HEK293 (cell line): ENCODE measurements at regions of chr2 and their contacts with region 1.

Region 1: GRCh38 chr2:201182650-201183364 is at the start of gene CASP10:
- H3K4me3 ChIP-seq: peak within 1 kb of the TSS; percentile 42
- H3K27ac ChIP-seq: no peak within 1 kb of the TSS
- H3K4me1 ChIP-seq: no peaks in the 10 kb centered on the region
- CTCF ChIP-seq: peak; percentile 81

Region 2: DNA sequence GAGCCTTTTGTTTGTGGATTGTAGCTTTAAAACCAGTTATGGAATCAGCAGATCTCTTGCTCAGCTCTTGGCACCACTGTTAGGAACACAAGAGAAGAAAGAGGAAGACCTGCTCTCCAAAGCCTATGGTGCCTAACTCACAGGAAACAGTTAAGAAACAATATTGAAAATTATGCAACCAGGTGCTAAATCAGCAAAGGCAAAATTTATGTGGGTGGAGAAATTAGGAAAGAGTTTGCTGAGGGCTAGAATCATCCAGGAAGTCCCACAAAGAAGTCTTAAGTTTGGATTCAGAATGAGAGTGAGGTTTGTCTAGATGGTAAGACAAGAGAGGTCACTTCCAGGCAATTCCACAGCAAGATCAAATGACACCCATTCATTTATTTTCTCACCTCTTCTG is 547.6 kb before region 1 on chr2:
- CTCF ChIA-PET with region 1: no interaction called
- POLR2A ChIA-PET with region 1: no interaction called
- H3K4me3 ChIP-seq: no peak overlapping the region
- H3K27ac ChIP-seq: no peak overlapping the region
- H3K4me1 ChIP-seq: no peaks in the 10 kb centered on the region
- CTCF ChIP-seq: no peak

Region 3: DNA sequence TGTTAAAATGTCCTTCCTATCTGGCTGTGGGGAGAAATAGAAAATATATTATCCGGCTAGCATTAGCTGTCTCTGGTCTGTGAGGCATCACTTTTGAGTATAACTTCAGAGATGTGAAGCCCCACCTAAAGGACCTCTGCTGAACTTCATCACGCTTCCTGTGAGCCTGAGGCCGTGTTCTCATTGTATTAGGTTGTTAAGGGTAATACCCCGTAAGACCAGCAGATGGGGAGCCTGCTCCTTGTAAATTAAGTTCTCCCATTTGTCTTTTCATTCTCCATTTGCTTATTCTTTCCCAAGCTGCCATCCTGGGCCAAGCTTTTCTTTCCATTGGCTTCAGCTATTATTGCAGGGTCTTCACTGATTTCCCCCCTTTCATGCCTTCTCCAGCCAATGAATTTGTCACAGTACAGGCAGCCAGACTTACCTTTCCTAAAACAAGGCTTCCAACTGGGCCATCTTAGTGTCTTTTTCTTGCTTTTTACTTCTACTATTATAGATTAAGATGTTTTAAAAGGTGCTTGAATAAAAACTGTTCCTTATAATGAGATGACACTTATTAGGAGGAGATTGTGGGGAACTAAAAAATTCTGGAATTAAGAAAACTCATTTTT is 281.2 kb before region 1 on chr2:
- CTCF ChIA-PET with region 1: interaction called, 41 read pairs
- POLR2A ChIA-PET with region 1: interaction called, 3 read pairs
- H3K4me3 ChIP-seq: no peak overlapping the region
- H3K27ac ChIP-seq: no peak overlapping the region
- H3K4me1 ChIP-seq: no peaks in the 10 kb centered on the region
- CTCF ChIP-seq: peak; percentile 78

Region 4: DNA sequence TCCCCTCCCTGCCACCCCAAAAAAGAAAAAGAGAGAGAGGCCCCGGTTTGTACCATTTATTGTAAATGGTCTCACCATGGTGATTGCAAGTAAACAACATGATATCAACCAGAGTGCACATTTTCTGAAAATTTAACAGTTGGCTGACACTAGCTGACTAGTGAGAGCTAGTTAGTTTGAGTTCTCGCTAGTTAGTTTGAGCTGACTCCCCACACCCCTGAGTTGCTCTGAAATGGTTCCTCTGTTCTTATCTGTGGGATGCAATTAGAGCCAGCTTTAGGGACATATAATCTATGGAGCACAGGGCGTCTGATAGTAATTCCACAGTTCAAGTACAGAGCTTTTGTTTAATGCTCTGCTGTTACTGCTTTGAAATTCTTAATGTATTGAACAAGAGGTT is 13.2 kb after region 1 on chr2:
- CTCF ChIA-PET with region 1: interaction called, 10 read pairs
- POLR2A ChIA-PET with region 1: no interaction called
- H3K4me3 ChIP-seq: no peak overlapping the region
- H3K27ac ChIP-seq: no peak overlapping the region
- H3K4me1 ChIP-seq: no peaks in the 10 kb centered on the region
- CTCF ChIP-seq: no peak